Right ventricle myocardium inferior (tissue), 1 donor: ENCODE measurements at regions of chr21 and their contacts with region 1.

Region 1: GRCh38 chr21:15064576-15065391 is at the start of gene NRIP1:
- DNase-seq: peak; percentile 96
- ATAC-seq: peak; percentile 96
- total RNA-seq, gene NRIP1: 16.0 TPM

Region 2: GRCh38 chr21:14382835-14383594 is 681.8 kb before region 1 on chr21 and contains the start of gene HSPA13:
- intact Hi-C with region 1: loop called (anchors 10 kb)
- DNase-seq: peak; percentile 100
- ATAC-seq: peak; percentile 100
- total RNA-seq, gene HSPA13: 12.7 TPM

Region 3: DNA sequence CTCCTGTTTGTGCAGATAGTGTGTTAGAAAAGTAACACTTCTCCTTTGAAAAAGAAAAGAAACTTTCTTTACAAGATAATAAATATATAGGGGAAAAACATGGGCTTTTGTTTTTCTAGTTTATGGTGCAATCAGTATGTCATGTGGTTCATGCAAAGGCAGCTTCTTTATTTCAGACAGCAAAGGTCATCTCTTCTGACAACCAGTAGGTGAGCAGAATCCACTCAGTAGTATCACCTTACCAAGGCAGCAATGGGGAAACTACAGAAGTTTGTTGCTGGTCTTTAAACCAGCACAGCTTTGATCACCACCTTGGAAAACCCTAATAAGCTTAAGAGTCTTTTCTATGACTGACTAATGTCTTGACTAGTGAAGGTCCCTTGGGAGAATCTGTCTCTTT is 505.7 kb before region 1 on chr21:
- intact Hi-C with region 1: no loop called
- DNase-seq: no peak
- ATAC-seq: no peak

Region 4: DNA sequence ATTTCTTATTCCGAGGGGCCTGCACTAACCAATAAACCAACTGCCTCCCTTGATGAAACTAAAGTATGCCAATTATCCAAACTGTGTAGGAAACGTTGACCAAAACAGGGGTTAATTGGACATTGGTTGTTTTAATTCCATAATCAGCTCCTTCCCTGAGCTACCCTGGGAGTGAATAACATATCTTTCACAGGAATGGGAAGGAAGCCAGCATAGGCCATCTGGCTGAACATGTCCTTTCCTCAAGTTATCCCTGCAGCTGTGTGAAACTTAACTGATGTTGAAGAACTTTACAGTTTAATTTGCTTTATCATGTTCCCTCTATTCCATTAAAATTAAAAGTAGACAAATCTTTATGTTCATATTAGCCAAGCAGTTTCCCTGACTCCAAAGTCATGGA is 75.4 kb before region 1 on chr21:
- intact Hi-C with region 1: loop called (anchors 5 kb)
- DNase-seq: no peak
- ATAC-seq: peak; percentile 87

Region 5: DNA sequence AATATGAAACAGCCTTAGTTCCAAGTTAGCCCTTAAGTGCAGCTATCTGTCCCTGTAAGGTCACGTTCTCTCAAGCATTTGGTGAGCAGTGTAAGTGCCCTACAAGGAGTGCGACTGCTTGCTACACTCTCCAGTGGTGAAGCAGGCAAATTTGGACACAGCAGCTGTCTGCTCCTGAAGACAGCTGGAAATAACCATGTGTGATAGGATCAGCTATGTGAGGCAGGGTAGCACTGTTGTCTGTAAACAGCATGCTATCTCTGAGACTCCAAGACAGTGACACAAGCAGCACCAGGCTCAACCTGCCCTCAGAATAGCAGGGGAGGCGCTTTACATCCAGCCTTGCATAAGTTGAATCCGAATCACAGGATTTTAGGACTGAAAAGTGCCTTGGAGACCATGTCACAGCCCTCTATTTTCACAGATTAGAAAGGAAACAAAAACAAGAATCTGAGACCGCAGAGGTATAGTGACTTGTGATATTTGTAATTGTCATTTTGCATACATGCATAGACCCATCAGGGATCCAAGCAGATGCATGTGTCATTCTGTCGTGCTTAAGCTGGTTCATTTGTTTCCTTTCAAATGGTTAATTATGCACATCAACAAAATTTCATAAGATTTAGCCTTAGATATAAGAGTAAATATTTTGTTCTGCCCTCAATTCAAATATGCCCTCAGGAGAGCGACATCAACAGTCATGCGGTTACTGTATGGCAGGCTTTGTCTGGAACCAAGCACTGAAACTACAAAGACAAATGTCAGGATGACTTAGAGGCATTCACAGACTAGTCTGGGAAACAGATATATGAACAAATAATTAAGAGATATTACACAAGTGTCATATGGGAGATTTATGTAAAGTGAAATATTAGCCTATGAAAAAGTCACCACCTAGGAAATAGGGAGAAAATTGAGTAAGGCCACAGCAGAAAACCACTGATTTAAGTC is 134.9 kb after region 1 on chr21:
- intact Hi-C with region 1: loop called (anchors 5 kb)
- DNase-seq: no peak
- ATAC-seq: peak; percentile 80

Region 6: GRCh38 chr21:15379776-15380175 is 315.0 kb after region 1 on chr21:
- intact Hi-C with region 1: loop called (anchors 5 kb)
- DNase-seq: no peak
- ATAC-seq: no peak

Region 7: DNA sequence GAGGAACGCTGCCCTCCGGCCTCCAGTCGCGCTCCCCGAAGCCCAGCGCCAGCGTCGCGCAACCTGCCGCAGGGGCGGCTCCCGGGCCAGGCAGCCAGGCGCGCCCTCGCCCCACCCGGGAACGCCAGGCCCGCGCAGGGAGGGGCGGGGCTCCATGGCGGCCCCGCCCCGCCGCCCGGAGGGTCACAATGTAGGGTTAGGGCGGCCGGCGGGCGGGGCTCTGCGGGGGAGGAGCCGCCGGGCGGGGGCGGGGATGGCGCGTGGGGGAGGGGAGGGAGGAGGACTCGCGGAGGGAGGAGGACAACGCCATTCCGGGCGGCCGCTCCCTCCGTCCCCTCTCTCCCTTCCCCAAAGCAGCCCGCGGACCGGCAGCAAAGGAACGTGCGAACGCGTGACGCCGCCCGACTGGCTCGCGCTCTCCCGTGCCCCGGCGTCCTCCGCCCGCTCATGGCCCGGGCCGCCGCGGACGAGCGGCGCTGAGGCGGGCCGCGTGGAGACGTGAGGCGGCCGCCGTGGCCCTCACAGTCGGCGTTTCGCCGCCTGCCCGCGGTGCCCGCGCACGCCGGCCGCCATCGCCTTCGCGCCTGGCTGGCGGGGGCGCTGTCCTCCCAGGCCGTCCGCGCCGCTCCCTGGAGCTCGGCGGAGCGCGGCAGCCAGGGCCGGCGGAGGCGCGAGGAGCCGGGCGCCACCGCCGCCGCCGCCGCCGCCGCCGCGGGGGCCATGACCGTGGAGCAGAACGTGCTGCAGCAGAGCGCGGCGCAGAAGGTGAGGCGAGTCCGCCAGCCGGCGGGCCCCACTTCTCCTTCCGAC is 665.1 kb after region 1 on chr21 and contains the start of gene USP25:
- intact Hi-C with region 1: loop called (anchors 10 kb)
- DNase-seq: peak; percentile 98
- ATAC-seq: peak; percentile 99
- total RNA-seq, gene USP25: 48.4 TPM